ENCODE measurements at regions of chrX and their contacts with region 1.

Region 1: DNA sequence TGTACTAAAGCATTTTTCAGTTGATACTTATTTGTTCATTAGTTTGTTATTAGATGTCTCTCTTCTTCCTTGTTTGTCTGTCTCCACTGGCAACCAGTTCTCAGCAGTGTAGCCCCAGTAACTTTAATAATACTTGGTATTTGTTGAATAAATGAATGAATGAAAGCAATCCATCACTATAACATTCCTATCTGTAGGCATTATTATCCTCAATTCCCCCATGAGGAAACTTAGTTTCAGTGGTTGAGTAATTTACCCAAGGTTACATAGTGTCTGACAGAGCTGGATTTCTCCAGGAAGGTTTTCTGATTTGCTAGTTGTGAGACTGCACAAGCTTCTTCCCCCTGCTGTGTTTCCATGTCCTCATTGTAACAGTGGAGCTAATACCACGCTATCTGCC is 27.8 kb upstream of the MAOB start:
- DNase-seq: no peak
- ATAC-seq: no peak
- H3K4me3 ChIP-seq: no peak overlapping the region
- H3K27ac ChIP-seq: no peak overlapping the region
- H3K4me1 ChIP-seq: no peaks in the 10 kb centered on the region
- H3K27me3 ChIP-seq: no peaks in the 10 kb centered on the region; the same call in none of the 2 replicates
- CTCF ChIP-seq: no peak
- POLR2A ChIP-seq: no peak
- RAD21 ChIP-seq: no peak

Region 2: GRCh38 chrX:43849173-43849572 is 60.8 kb before region 1 on chrX:
- CTCF ChIA-PET with region 1: no interaction called
- POLR2A ChIA-PET with region 1: no interaction called
- dilution Hi-C with region 1: no loop called
- in situ Hi-C with region 1: no loop called
- intact Hi-C with region 1: no loop called
- DNase-seq: no peak
- ATAC-seq: no peak
- H3K4me3 ChIP-seq: no peak overlapping the region
- H3K27ac ChIP-seq: no peak overlapping the region
- H3K4me1 ChIP-seq: no peaks in the 10 kb centered on the region
- H3K27me3 ChIP-seq: peaks cover 3% of the 10 kb centered on the region; the same call in 1 of the 2 replicates
- CTCF ChIP-seq: no peak
- POLR2A ChIP-seq: no peak
- RAD21 ChIP-seq: no peak

Region 3: DNA sequence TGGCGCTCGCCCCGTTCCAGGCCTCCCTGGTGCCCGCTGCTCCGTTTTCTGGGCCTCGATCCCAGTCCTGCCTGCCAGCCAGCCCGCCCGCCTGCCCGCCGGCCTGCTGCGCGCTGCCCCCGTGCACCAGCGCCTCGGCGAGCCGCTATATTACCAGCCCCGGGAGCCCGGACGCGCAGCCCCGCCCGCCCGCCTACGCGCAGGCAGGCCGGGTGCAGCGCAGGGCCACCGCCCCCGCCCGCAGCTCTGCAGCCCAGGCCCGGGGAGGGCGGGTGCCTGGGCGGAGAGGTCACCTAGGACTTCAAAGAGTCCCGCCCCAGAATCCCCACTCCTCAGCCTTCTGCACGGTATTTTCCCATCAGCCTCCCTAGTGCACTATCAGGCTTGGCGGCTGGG is 27.7 kb before region 1 on chrX and contains the start of gene MAOB:
- CTCF ChIA-PET with region 1: no interaction called
- POLR2A ChIA-PET with region 1: interaction called, 12 read pairs
- dilution Hi-C with region 1: no loop called
- in situ Hi-C with region 1: no loop called
- intact Hi-C with region 1: no loop called
- DNase-seq: no peak
- ATAC-seq: peak; percentile 56
- H3K4me3 ChIP-seq: no peak within 1 kb of the TSS
- H3K27ac ChIP-seq: no peak within 1 kb of the TSS
- H3K4me1 ChIP-seq: no peaks in the 10 kb centered on the region
- H3K27me3 ChIP-seq: peaks cover 17% of the 10 kb centered on the region
- CTCF ChIP-seq: no peak
- POLR2A ChIP-seq: no peak
- RAD21 ChIP-seq: no peak
- total RNA-seq, gene MAOB: 0.28 and 0.36 TPM in 2 replicates

Measured in IMR-90 (cell line).